Heart right ventricle (tissue), 16 donors: ENCODE measurements at regions of chr18 and their contacts with region 1.

Region 1: GRCh38 chr18:50649821-50650220 is 89.9 kb downstream of the MAPK4 start:
- DNase-seq: peak; percentile 73 to 75
- ATAC-seq: peak; percentile 71 to 89 (median 83)
- H3K4me3 ChIP-seq: peak overlapping the region in 3 of 10 donors; percentile 7 to 30 (median 28)
- H3K27ac ChIP-seq: peak overlapping the region; percentile 65 to 95 (median 87)
- H3K4me1 ChIP-seq: peaks cover 0 to 53% (median 24%) of the 10 kb centered on the region in 9 donors
- H3K27me3 ChIP-seq: no peaks in the 10 kb centered on the region
- CTCF ChIP-seq: no peak

Region 2: GRCh38 chr18:50606609-50607008 is 43.2 kb before region 1 on chr18:
- intact Hi-C with region 1: loop called in 2 of 10 experiments (anchors 5 kb)
- DNase-seq: peak in 1 of 2 donors; percentile 8
- ATAC-seq: peak in 7 of 8 donors; percentile 45 to 80 (median 71)
- H3K4me3 ChIP-seq: no peak overlapping the region
- H3K27ac ChIP-seq: peak overlapping the region in 4 of 10 donors; percentile 0 to 62 (median 36)
- H3K4me1 ChIP-seq: peaks cover 0 to 16% (median 0%) of the 10 kb centered on the region in 9 donors
- H3K27me3 ChIP-seq: no peaks in the 10 kb centered on the region
- CTCF ChIP-seq: no peak

Region 3: DNA sequence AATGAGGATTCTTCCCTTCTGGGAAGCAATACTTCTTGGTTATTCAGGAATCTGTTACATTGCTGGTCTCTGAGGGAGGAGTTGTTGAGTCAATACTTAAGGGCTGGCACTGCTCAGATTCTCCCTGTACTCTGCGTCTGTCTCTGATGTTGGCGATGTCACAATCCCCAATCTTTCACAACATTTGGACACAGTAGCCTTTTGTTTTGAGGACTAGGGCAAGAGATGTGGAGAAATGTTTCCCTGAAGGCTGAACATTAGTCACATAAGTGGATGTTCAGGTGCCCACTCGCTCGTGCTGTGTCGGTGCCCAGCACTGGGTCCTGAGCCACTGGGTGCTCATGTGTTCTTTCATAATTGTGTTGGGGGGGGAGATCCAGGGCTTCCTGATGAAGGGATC is 35.0 kb before region 1 on chr18:
- intact Hi-C with region 1: loop called in 1 of 10 experiments (anchors 5 kb)
- DNase-seq: no peak
- ATAC-seq: peak in 3 of 8 donors; percentile 11 to 78 (median 11)
- H3K4me3 ChIP-seq: no peak overlapping the region
- H3K27ac ChIP-seq: no peak overlapping the region
- H3K4me1 ChIP-seq: peaks cover 0 to 28% (median 4%) of the 10 kb centered on the region in 9 donors
- H3K27me3 ChIP-seq: no peaks in the 10 kb centered on the region
- CTCF ChIP-seq: no peak